K562 (cell line): ENCODE measurements at regions of chr22 and their contacts with region 1.

Region 1: GRCh38 chr22:22487869-22488597 is 20.5 kb downstream of the ZNF280B start:
- DNase-seq: peak in 1 of 4 experiments; percentile 39
- ATAC-seq: no peak
- H3K4me3 ChIP-seq: no peak overlapping the region
- H3K27ac ChIP-seq: no peak overlapping the region
- H3K4me1 ChIP-seq: no peaks in the 10 kb centered on the region
- H3K27me3 ChIP-seq: no peaks in the 10 kb centered on the region
- CTCF ChIP-seq: no peak
- EP300 ChIP-seq: no peak
- POLR2A ChIP-seq: no peak
- RAD21 ChIP-seq: no peak

Region 2: DNA sequence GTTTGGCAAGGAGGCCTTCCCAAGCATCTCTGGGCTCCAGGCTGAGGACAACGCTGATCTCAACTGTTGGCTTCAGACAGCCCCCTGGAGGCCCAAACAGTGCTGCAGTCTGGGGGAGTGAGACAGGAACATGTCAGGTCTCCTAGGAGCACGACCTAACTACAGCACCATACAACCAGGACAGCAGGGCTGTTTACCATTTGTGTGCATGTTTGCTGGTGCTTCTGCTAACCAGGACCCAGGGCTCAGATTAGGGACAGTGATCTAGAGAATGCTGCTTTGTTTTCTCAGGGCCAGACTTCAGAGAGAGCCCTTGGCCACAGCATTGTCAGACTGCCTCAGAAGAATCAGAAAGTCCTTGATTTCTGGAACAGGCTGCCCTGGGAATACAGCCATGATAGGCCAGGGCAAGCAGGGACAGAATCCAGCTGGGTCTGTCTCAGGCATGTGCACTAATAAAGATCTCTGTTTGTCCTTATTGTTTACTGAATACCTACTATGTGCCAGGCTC is 116.9 kb before region 1 on chr22:
- CTCF ChIA-PET with region 1: no interaction called
- POLR2A ChIA-PET with region 1: no interaction called
- in situ Hi-C with region 1: no loop called
- intact Hi-C with region 1: no loop called
- DNase-seq: peak; percentile 53 to 76 (median 66)
- ATAC-seq: peak; percentile 89
- H3K4me3 ChIP-seq: no peak overlapping the region
- H3K27ac ChIP-seq: no peak overlapping the region
- H3K4me1 ChIP-seq: no peaks in the 10 kb centered on the region
- H3K27me3 ChIP-seq: peaks cover 2 to 21% of the 10 kb centered on the region in 2 experiments; a peak in 3 of 5 replicates
- CTCF ChIP-seq: peak in 2 of 3 experiments; percentile 83 to 90; a peak in 4 of 6 replicates
- EP300 ChIP-seq: no peak
- POLR2A ChIP-seq: no peak
- RAD21 ChIP-seq: peak in 1 of 2 experiments; percentile 77; a peak in 2 of 4 replicates

Region 3: DNA sequence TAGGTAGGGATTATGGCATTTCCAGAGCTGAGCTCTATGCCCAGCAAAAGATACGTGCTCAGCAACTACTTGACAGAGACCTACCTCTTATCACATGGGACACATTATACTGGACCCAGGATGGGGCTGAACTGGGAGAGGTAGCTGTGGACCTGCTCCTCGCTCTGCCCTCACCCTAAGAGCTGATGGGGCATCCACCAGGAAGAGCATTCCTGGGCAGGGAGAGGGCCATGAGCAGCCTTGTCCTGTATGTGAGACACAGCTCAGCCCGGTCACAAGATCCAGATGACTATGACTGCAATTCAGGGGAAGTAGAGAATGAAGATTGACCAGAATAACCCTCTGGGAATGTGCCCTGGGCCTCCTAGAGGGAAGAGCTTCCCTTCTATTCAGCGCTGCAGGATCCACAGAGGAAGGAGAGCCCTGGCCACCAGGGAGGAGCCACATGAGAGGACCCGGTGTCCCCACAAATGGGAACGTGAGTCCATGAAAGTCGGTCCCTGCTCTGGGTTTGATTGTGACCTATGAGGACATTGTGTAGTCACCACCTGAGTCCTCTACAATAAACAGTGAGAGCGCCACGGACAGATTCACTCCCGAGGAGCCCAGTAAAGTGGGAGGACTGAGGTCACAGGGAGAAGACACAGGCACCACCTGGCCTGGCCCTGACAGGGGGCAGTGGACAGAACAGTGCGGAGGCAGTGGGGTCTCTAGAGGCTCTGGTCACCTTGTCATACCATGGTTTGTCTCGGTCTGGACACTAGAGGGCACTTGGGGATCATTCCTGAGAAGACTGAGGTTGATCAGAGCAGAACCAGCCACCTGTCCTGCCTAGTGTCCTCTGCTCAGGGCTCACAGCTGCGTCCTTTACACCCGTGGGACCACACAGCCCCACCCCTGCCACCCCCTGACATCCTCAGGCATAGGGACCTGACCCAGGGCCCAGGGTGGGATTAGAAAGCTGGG is 79.0 kb before region 1 on chr22:
- CTCF ChIA-PET with region 1: no interaction called
- POLR2A ChIA-PET with region 1: no interaction called
- in situ Hi-C with region 1: no loop called
- intact Hi-C with region 1: no loop called
- DNase-seq: peak; percentile 86 to 91 (median 87)
- ATAC-seq: peak; percentile 98
- H3K4me3 ChIP-seq: no peak overlapping the region
- H3K27ac ChIP-seq: no peak overlapping the region
- H3K4me1 ChIP-seq: no peaks in the 10 kb centered on the region
- H3K27me3 ChIP-seq: peaks cover 21 to 49% of the 10 kb centered on the region in 2 experiments; a peak in 4 of 5 replicates
- CTCF ChIP-seq: peak in 2 of 3 experiments; percentile 98 to 99; a peak in 4 of 6 replicates
- EP300 ChIP-seq: no peak
- POLR2A ChIP-seq: no peak
- RAD21 ChIP-seq: no peak

Region 4: GRCh38 chr22:22474733-22475132 is 13.3 kb before region 1 on chr22:
- CTCF ChIA-PET with region 1: interaction called, 4 read pairs
- POLR2A ChIA-PET with region 1: interaction called, 45 read pairs
- in situ Hi-C with region 1: no loop called
- intact Hi-C with region 1: no loop called
- DNase-seq: peak in 2 of 4 experiments; percentile 46 to 47
- ATAC-seq: peak; percentile 61
- H3K4me3 ChIP-seq: no peak overlapping the region
- H3K27ac ChIP-seq: no peak overlapping the region
- H3K4me1 ChIP-seq: peaks cover 0 to 7% of the 10 kb centered on the region in 2 experiments; a peak in 2 of 5 replicates
- H3K27me3 ChIP-seq: peaks cover 9 to 18% of the 10 kb centered on the region in 2 experiments
- CTCF ChIP-seq: no peak
- EP300 ChIP-seq: no peak
- POLR2A ChIP-seq: no peak
- RAD21 ChIP-seq: no peak

Region 5: DNA sequence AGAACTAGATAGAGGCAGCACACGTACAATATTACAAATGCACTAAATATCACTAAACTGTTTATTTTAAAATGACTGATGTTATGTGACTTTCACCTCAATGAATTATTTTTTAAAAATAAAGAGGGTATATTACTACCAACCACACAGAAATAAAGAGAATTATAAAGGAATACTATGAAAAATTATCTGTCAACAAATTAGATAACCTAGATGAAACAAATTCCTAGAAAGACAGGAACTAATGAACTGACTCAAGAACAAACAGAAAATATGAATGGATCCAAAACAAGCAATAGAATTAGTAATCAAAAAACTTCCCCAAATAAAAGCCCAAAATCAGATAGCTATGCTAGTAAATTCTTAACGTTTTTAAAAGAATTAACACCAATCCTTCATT is 10.2 kb after region 1 on chr22:
- CTCF ChIA-PET with region 1: no interaction called
- POLR2A ChIA-PET with region 1: interaction called, 48 read pairs
- in situ Hi-C with region 1: no loop called
- intact Hi-C with region 1: no loop called
- DNase-seq: no peak
- ATAC-seq: no peak
- H3K4me3 ChIP-seq: no peak overlapping the region
- H3K27ac ChIP-seq: no peak overlapping the region
- H3K4me1 ChIP-seq: no peaks in the 10 kb centered on the region
- H3K27me3 ChIP-seq: no peaks in the 10 kb centered on the region
- CTCF ChIP-seq: no peak
- EP300 ChIP-seq: no peak
- POLR2A ChIP-seq: no peak
- RAD21 ChIP-seq: no peak

Region 6: DNA sequence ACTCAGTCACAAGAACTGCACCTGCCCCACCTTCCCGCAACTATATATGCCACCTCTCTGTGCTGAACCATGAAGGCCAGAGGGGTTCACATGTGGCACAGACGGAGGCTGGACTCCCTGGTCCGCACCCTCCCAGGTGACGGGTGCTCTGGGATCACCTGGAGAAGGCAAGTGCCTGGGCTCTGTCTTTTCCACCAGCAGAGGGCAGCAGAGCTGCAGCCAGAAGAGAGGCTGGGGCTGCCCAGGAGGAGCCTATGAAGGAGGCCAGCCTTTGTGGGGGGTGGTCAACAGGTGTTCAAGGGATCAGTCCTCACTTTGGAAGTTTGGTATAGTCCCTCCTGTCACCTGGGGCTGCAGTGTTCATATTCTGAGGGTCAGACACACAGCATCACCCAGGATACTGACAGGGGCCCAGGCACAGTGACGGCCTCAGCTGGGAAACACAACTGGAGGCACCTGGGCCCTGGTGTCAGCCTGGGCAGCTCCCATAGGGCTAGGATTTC is 360.4 kb after region 1 on chr22:
- CTCF ChIA-PET with region 1: no interaction called
- POLR2A ChIA-PET with region 1: no interaction called
- in situ Hi-C with region 1: no loop called
- intact Hi-C with region 1: no loop called
- DNase-seq: peak; percentile 94 to 100 (median 98)
- ATAC-seq: peak; percentile 98
- H3K4me3 ChIP-seq: no peak overlapping the region
- H3K27ac ChIP-seq: no peak overlapping the region
- H3K4me1 ChIP-seq: no peaks in the 10 kb centered on the region
- H3K27me3 ChIP-seq: peaks cover 0 to 8% of the 10 kb centered on the region in 2 experiments; a peak in 1 of 5 replicates
- CTCF ChIP-seq: no peak
- EP300 ChIP-seq: no peak
- POLR2A ChIP-seq: no peak
- RAD21 ChIP-seq: no peak